Activated CD8-positive, alpha-beta T cell treated with anti-CD3 and anti-CD28 coated beads for 36 hours (primary cell): ENCODE measurements at regions of chr1 and their contacts with region 1.

Region 1: GRCh38 chr1:181122204-181122603 is 33.7 kb downstream of the IER5 start:
- DNase-seq: no peak
- ATAC-seq: no peak
- H3K4me3 Mint-ChIP-seq: no peak overlapping the region
- H3K27ac Mint-ChIP-seq: no peak overlapping the region
- H3K4me1 Mint-ChIP-seq: peaks cover 6% of the 10 kb centered on the region
- H3K27me3 Mint-ChIP-seq: no peaks in the 10 kb centered on the region
- CTCF ChIP-seq: no peak

Region 2: DNA sequence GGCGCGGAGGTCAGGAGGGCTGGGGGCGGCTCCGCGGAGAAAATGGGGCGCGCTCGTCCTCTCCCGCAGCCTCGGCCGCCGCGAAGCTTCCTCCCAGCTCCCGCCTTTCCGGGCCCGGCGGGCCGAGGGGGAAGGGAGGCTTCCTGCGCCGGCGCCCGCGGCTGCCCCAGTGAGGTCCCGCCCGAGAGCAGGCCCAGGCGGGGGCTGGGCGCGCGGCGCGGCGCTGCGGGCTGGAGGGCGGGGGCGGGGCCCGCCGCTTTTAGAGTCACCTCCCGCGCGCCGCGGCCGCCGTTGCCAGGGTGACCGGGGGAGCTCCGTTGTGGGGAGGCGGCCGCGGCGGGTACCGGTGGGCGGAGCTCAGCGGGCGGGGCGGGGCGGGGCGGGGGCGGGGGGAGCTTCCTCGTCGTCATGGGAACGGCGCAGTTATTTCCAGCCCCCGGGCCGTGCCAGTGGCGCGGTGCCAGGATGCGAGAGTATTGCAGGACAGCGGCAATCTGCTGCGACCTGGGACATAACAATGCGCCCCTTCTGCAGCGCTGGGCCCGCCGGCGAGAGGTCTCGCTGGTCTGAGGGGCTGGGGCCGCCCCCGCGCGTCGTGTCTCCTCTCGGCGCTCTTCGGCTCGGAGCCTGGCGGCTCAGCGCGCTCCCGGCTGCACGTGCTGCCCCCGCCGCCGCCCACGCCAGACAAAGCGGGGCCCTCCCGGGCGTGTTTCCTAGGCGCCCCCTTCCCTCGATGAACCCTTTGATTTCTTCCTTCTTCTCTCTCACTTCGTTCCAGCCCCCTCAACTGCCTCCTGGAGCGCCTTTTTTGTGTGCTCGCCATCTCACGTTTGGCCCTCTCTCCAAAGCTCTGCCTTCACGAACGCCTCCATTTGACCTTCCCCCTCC is 16.8 kb before region 1 on chr1:
- CTCF ChIA-PET with region 1: interaction called, 6 read pairs
- POLR2A ChIA-PET with region 1: interaction called, 12 read pairs
- intact Hi-C with region 1: no loop called
- DNase-seq: peak; percentile 92
- ATAC-seq: peak; percentile 83
- H3K4me3 Mint-ChIP-seq: peak overlapping the region; percentile 77
- H3K27ac Mint-ChIP-seq: peak overlapping the region; percentile 71
- H3K4me1 Mint-ChIP-seq: peaks cover 53% of the 10 kb centered on the region
- H3K27me3 Mint-ChIP-seq: peaks cover 11% of the 10 kb centered on the region
- CTCF ChIP-seq: no peak